GM10248 (cell line): ENCODE measurements at regions of chr12 and their contacts with region 1.

Region 1: GRCh38 chr12:12349711-12350665 is at the start of gene MANSC1:
- DNase-seq: peak; percentile 39
- CTCF ChIP-seq: no peak

Region 2: DNA sequence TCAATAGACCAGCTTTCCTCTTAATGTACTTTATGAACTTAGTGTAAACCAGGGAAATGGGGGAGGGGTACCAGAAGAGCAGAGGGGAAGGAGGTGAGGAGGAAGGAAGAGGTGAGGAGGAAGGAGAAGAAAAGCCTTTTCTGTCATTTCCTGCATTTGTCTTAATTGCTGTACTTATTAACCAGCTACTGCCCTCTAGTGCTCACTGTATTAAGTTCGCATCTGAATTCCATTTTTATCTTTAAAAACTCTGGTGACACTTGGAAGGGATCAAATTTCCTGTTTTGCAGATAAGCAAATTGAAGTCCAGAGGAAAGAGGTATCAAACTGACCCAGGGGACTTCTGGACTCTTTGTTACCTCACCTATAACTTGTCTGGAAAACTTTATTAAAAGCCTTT is 22.2 kb before region 1 on chr12:
- CTCF ChIA-PET with region 1: interaction called, 29 read pairs
- POLR2A ChIA-PET with region 1: no interaction called
- DNase-seq: peak; percentile 65
- CTCF ChIP-seq: peak; percentile 74

Region 3: DNA sequence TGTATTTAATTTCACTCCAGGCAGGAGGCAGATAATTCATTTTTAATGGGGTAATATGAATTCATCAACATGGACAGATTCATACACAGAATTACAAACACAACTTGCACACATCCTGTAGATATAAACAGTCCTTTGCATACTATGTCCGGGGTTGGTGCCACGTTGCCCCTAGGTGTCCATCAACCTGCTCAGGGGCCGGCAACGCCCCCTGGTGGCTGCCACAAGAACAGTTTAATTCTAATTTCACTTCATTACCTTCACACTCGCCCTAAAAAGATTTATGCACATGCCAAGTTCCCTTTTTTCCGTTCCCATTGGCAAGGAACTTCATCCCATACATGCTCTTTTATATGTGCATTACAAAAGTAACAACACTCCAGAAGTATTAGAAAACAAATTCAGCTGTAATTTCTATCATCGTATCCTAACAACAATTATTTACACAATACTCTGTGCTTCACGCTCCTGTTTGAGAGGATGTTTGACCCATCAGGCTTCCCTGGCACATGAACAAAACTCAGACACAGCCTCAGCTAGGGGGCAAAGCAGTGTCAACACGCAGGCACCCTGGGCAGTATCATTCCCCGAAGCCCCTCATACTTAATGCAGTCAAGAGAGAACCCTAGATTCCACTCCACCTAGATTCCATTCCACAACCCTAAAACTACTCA is 15.5 kb before region 1 on chr12:
- CTCF ChIA-PET with region 1: interaction called, 29 read pairs
- POLR2A ChIA-PET with region 1: no interaction called
- DNase-seq: peak; percentile 80
- CTCF ChIP-seq: peak; percentile 71

Region 4: DNA sequence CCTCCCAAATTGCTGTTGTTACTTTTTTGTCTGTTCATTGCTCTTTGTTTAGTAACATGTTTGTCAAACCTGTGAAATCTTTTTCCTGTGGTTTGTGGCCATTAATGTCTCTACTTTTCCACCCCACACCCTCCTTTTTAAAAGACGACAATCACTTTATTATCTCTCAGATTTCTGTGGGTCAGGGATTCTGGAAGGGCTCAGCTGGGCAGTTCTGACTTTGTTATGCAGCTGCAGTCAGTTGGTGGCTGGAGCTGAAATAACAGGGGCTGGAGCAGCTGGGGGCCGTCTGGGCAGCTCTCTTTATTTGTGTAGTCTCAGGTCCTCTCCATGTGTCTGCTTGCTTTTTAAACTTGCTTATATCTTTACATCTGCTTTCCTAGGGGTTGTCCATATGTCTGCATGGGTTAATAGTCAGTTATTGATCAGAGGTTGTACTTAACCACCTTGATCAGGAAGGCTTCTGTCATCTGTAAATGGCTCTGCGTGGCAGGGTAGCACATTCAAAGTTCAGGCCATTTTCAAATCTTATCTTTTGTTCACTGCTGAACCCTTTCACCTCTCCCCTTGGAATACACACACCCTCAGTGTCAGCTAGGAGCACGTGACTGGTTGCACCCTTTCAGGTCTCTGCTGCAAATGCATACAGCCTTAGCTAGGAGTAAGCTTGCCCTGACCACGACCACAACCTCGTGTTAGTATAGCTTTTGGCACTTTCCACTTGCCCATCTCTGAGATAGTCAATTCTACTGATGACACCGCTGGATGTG is 34.8 kb after region 1 on chr12:
- CTCF ChIA-PET with region 1: no interaction called
- POLR2A ChIA-PET with region 1: no interaction called
- DNase-seq: no peak
- CTCF ChIP-seq: no peak

Region 5: DNA sequence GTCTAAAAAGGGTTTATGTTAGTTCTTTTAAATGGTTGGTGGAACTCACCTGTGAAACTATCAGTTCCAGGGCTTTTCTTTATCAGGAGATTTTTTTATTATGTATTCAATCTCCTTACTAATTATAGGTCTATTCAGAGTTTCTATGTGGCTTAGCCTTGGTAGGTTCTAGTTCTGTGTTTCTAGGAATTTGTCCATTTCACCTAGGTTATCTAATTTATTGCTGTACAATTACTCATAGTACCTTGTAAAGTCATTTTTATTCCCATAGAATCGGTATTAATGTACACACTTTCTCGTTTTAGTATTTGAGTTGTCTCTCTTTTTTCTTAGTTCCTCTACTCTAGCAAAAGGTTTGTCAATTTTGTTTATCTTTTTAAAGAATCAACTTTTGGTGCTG is 65.9 kb after region 1 on chr12:
- CTCF ChIA-PET with region 1: no interaction called
- POLR2A ChIA-PET with region 1: interaction called, 12 read pairs
- DNase-seq: no peak
- CTCF ChIP-seq: no peak